ENCODE measurements at regions of chr1 and their contacts with region 1.

Region 1: GRCh38 chr1:241998412-241998921 is 431 bp downstream of the MAP1LC3C start:
- DNase-seq: peak; percentile 52
- ATAC-seq: peak; percentile 88
- H3K4me3 Mint-ChIP-seq: peak overlapping the region; percentile 80
- H3K27ac Mint-ChIP-seq: no peak overlapping the region
- H3K4me1 Mint-ChIP-seq: peaks cover 5% of the 10 kb centered on the region
- H3K27me3 Mint-ChIP-seq: peaks cover 5% of the 10 kb centered on the region
- CTCF ChIP-seq: no peak

Region 2: GRCh38 chr1:241895013-241895412 is 103.5 kb before region 1 on chr1:
- CTCF ChIA-PET with region 1: interaction called, 36 read pairs
- POLR2A ChIA-PET with region 1: no interaction called
- intact Hi-C with region 1: loop called (anchors 1 kb)
- DNase-seq: no peak
- ATAC-seq: no peak
- H3K4me3 Mint-ChIP-seq: no peak overlapping the region
- H3K27ac Mint-ChIP-seq: no peak overlapping the region
- H3K4me1 Mint-ChIP-seq: peaks cover 15% of the 10 kb centered on the region
- H3K27me3 Mint-ChIP-seq: no peaks in the 10 kb centered on the region
- CTCF ChIP-seq: no peak